ENCODE measurements at regions of chr12 and their contacts with region 1.

Region 1: DNA sequence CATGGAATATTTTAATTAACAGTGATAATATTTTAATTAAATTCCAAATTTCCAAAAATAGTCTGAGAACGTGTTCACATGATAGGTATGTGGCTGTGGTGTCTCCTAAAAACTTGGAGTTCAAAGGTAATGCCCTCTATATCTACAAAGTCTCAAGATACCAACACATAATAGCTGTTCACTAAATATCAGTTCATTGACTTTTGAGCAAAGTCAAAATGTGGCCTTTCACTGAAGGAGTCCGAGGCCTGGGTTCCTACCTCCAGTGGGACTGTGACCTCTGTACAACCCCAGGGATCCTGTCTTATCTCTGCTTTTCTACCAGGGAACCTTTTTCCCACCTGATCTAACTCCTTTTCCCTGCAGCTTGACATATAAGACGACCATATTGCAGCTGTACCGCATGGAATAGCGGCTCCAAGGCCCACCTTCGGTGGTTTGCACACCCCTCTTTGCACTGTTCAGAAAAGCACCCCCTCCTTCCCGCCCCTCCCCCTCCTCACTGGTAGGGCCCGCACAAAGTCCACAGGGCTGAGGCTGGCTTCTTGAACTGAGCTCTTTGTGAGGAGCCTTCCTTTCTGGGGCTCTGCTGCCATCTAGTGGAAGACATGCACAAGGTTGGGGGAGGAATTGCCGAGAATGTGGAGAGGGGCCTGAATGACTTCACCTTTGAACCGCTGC is 3.1 kb downstream of the CCND2 start:
- DNase-seq: peak; percentile 91
- ATAC-seq: peak; percentile 50
- H3K4me3 Mint-ChIP-seq: peak overlapping the region; percentile 91
- H3K27ac Mint-ChIP-seq: peak overlapping the region; percentile 92
- H3K4me1 Mint-ChIP-seq: peaks cover 61% of the 10 kb centered on the region
- H3K27me3 Mint-ChIP-seq: peaks cover 5% of the 10 kb centered on the region; the same call in 1 of the 2 replicates
- CTCF ChIP-seq: peak; percentile 90

Region 2: DNA sequence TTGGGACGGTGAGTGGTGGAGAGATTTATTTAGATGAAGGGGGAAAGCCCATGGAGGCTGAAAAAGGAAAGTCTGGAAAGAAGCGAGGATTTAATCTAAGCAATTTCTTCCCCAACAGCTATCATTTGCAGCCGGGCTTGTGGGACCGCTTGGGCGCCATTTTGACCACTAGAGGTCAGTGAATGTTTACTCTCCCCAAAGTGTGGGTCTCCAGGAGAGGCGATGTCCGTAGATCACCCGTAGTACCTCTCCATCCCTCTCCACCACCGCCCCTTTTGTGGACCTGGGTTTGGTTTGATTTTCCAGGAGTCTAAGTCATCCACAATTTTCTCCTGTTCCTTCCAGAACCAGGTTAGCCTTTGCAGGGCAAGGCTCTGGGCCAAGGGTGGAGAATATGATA is 312.2 kb before region 1 on chr12:
- CTCF ChIA-PET with region 1: interaction called, 23 read pairs
- POLR2A ChIA-PET with region 1: no interaction called
- DNase-seq: peak; percentile 71
- ATAC-seq: peak; percentile 90
- H3K4me3 Mint-ChIP-seq: no peak overlapping the region
- H3K27ac Mint-ChIP-seq: no peak overlapping the region
- H3K4me1 Mint-ChIP-seq: peaks cover 17% of the 10 kb centered on the region
- H3K27me3 Mint-ChIP-seq: no peaks in the 10 kb centered on the region; the same call in 1 of the 2 replicates
- CTCF ChIP-seq: peak; percentile 11; the same call in 1 of the 2 replicates

Region 3: GRCh38 chr12:4025417-4026358 is 251.0 kb before region 1 on chr12:
- CTCF ChIA-PET with region 1: interaction called, 21 read pairs
- POLR2A ChIA-PET with region 1: interaction called, 12 read pairs
- DNase-seq: peak; percentile 82
- ATAC-seq: peak; percentile 81
- H3K4me3 Mint-ChIP-seq: peak overlapping the region; percentile 50
- H3K27ac Mint-ChIP-seq: peak overlapping the region; percentile 99
- H3K4me1 Mint-ChIP-seq: peaks cover 89% of the 10 kb centered on the region
- H3K27me3 Mint-ChIP-seq: peaks cover 15% of the 10 kb centered on the region
- CTCF ChIP-seq: no peak

Region 4: GRCh38 chr12:4107436-4107878 is 169.2 kb before region 1 on chr12:
- CTCF ChIA-PET with region 1: interaction called, 33 read pairs
- POLR2A ChIA-PET with region 1: interaction called, 3 read pairs
- DNase-seq: peak; percentile 54
- ATAC-seq: peak; percentile 89
- H3K4me3 Mint-ChIP-seq: no peak overlapping the region
- H3K27ac Mint-ChIP-seq: no peak overlapping the region
- H3K4me1 Mint-ChIP-seq: peaks cover 20% of the 10 kb centered on the region
- H3K27me3 Mint-ChIP-seq: peaks cover 7% of the 10 kb centered on the region
- CTCF ChIP-seq: peak; percentile 49

Region 5: GRCh38 chr12:4164559-4165558 is 111.8 kb before region 1 on chr12:
- CTCF ChIA-PET with region 1: interaction called, 17 read pairs
- POLR2A ChIA-PET with region 1: interaction called, 12 read pairs
- DNase-seq: peak; percentile 77
- ATAC-seq: peak; percentile 88
- H3K4me3 Mint-ChIP-seq: peak overlapping the region; percentile 67
- H3K27ac Mint-ChIP-seq: peak overlapping the region; percentile 64
- H3K4me1 Mint-ChIP-seq: peaks cover 40% of the 10 kb centered on the region
- H3K27me3 Mint-ChIP-seq: peaks cover 20% of the 10 kb centered on the region
- CTCF ChIP-seq: no peak

Region 6: DNA sequence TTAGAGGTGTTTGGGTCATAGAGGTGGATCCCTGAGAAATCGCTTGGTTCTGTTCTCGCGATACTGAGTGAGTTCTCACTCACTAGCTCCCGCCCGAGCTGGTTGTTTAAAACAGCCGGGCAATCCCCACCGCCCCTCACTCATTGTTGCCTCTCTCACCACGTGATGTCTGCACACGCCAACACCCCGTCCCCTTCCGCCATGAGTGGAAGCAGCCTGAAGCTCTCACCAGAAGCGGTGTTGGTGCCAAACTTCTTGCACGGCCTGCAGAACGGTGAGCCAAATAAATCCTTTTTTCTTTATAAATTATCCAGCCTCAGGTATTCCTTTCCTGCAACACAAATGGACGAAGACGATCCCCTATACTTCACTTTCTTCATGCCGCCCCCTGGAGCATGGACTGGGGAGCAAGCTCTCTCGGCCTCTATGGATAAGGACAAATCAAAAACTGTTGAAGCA is 48.5 kb before region 1 on chr12:
- CTCF ChIA-PET with region 1: interaction called, 22 read pairs
- POLR2A ChIA-PET with region 1: interaction called, 9 read pairs
- DNase-seq: peak; percentile 56
- ATAC-seq: peak; percentile 88
- H3K4me3 Mint-ChIP-seq: peak overlapping the region; percentile 67
- H3K27ac Mint-ChIP-seq: peak overlapping the region; percentile 75
- H3K4me1 Mint-ChIP-seq: peaks cover 16% of the 10 kb centered on the region
- H3K27me3 Mint-ChIP-seq: no peaks in the 10 kb centered on the region; the same call in 1 of the 2 replicates
- CTCF ChIP-seq: no peak

Region 7: DNA sequence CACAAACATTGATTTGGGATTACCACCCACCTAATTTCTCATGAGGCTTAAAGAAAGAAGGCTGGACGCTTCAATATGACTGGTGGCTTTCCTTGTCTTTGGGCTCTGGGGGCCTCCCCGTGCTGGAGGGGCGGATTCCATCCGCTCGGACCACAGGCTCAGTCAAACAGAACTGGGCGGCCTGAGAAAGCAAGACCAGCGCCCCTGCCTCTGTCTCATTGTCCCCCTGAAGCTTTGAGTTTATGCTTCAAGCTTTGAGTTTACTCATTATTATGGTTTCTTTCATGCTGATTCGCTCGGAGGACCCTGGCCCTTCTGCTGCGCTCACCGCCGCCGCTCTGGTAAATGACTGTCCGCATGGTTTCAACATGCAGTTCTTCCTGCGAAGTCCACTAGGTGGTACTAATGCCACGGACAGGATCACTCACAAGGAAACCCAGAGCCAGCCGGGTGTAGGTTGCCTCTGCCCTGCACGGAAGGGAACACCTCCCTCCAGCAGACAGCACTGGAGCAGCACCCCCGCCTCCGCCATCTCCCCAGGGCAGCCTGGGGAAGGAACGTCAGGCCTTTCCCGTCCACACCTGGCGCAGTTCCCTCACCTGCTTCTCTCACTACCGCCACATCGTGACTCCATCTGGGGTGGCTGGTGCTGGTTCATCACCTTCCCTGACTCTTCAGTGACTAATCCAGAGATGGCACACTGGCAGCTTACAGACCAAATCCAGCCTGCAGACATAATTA is 31.1 kb after region 1 on chr12:
- CTCF ChIA-PET with region 1: interaction called, 10 read pairs
- POLR2A ChIA-PET with region 1: no interaction called
- DNase-seq: peak; percentile 86
- ATAC-seq: peak; percentile 97
- H3K4me3 Mint-ChIP-seq: peak overlapping the region; percentile 64
- H3K27ac Mint-ChIP-seq: peak overlapping the region; percentile 88
- H3K4me1 Mint-ChIP-seq: peaks cover 26% of the 10 kb centered on the region
- H3K27me3 Mint-ChIP-seq: no peaks in the 10 kb centered on the region
- CTCF ChIP-seq: peak; percentile 58